ENCODE measurements at regions of chr1 and their contacts with region 1.

Region 1: GRCh38 chr1:77056525-77056924 is 162.7 kb downstream of the PIGK start:
- DNase-seq: no peak
- H3K4me3 ChIP-seq: no peak overlapping the region
- H3K27ac ChIP-seq: no peak overlapping the region
- H3K4me1 ChIP-seq: no peaks in the 10 kb centered on the region
- H3K27me3 ChIP-seq: no peaks in the 10 kb centered on the region
- CTCF ChIP-seq: no peak

Region 2: DNA sequence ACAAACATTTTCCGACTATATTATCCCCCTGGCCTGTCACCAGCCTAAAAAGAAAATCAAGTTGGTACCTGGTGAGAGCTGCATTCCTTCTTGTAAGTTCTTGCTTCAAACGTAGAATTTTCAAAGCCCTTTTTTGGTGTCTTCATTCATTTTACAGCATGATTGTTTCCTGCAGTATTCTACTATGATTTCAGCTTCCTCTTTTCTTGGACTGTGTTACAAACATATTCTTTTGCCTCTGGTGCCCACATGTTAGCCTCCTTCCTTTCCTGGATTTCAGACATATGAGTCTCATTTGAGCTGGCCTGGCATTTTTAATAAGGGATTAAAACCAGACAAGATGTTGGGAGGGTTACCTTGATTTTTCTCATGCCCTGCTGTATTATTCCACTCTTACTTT is 20.2 kb after region 1 on chr1:
- intact Hi-C with region 1: no loop called
- DNase-seq: no peak
- H3K4me3 ChIP-seq: no peak overlapping the region
- H3K27ac ChIP-seq: no peak overlapping the region
- H3K4me1 ChIP-seq: no peaks in the 10 kb centered on the region
- H3K27me3 ChIP-seq: no peaks in the 10 kb centered on the region
- CTCF ChIP-seq: no peak

Region 3: GRCh38 chr1:77095233-77095632 is 38.7 kb after region 1 on chr1:
- intact Hi-C with region 1: loop called (anchors 2 kb)
- DNase-seq: no peak
- H3K4me3 ChIP-seq: no peak overlapping the region
- H3K27ac ChIP-seq: no peak overlapping the region
- H3K4me1 ChIP-seq: no peaks in the 10 kb centered on the region
- H3K27me3 ChIP-seq: no peaks in the 10 kb centered on the region
- CTCF ChIP-seq: no peak

Region 4: DNA sequence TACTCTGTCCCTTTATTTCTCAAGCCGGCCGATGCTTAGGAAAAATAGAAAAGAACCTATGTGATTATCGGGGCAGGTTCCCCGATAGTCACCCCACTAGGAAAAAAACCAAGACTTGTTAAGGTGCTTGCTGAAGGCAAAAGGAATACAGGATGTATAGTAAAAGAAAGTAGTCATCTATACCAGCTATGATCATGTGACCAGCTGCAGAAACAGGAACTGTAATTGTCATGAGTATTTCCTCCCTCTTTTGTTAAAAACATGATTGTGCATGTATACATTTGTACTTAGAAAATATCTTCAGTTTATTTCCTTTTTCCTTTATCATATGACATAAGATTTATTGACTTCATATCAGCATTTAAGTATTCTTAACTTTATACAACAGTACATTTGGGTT is 132.2 kb after region 1 on chr1:
- intact Hi-C with region 1: no loop called
- DNase-seq: no peak
- H3K4me3 ChIP-seq: no peak overlapping the region
- H3K27ac ChIP-seq: no peak overlapping the region
- H3K4me1 ChIP-seq: no peaks in the 10 kb centered on the region
- H3K27me3 ChIP-seq: no peaks in the 10 kb centered on the region
- CTCF ChIP-seq: no peak